ENCODE measurements at regions of chr1 and their contacts with region 1.

Region 1: DNA sequence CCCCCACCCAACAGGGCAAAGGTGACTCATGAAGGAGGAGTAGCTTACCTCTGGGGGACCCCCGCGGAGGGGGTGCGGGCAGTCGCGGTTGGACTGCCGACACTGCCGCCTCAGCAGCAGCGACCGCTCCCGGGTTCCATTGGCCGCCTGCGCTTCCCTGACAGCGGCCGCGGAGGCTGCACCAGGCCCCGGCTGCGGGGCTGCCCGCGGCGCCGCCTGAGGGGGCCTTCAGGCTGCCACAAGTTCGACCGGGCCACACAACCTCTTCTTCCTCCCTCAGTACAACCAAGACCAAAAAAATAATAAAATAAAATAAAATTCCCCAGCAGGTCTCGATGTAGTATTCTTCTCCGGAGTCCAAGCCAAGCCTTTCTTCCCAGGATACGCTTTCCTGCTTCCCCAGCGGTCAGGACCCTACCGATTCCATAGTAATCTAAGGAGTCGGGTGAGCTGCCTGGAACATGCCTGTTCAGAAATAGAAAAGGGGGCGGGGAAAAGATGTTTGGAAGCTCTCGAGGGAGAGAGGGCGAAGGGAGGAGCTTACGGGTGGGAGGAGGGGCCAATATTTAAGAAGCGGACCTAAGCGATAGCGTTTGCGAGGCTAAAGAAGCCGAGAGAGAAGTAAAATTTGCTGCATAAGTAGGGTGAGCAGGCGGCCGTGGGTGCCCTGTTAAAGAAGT is at the start of gene PI4KB:
- DNase-seq: peak; percentile 97
- ATAC-seq: peak; percentile 92
- H3K4me3 ChIP-seq: peak within 1 kb of the TSS; percentile 78 to 82 (median 79)
- H3K27ac ChIP-seq: peak within 1 kb of the TSS; percentile 93
- H3K4me1 ChIP-seq: peaks cover 33% of the 10 kb centered on the region
- H3K27me3 ChIP-seq: no peaks in the 10 kb centered on the region; a peak in 1 of 5 replicates
- CTCF ChIP-seq: no peak
- EP300 ChIP-seq: no peak
- POLR2A ChIP-seq: peak; percentile 58 to 69
- RAD21 ChIP-seq: no peak
- total RNA-seq, gene PI4KB: 18.6 and 19.5 TPM in 2 replicates

Region 2: GRCh38 chr1:151311589-151312331 is 15.6 kb before region 1 on chr1:
- CTCF ChIA-PET with region 1: no interaction called
- POLR2A ChIA-PET with region 1: interaction called, 21 read pairs
- in situ Hi-C with region 1: no loop called
- intact Hi-C with region 1: no loop called
- DNase-seq: peak; percentile 82
- ATAC-seq: peak; percentile 78
- H3K4me3 ChIP-seq: no peak overlapping the region
- H3K27ac ChIP-seq: no peak overlapping the region
- H3K4me1 ChIP-seq: peaks cover 17% of the 10 kb centered on the region
- H3K27me3 ChIP-seq: no peaks in the 10 kb centered on the region
- CTCF ChIP-seq: no peak
- EP300 ChIP-seq: no peak
- POLR2A ChIP-seq: no peak
- RAD21 ChIP-seq: no peak